ENCODE measurements at regions of chr6 and their contacts with region 1.

Region 1: GRCh38 chr6:139028658-139029469 is at the start of gene ABRACL:
- DNase-seq: peak; percentile 70
- H3K4me3 ChIP-seq: peak within 1 kb of the TSS; percentile 74 to 94 (median 77)
- H3K27ac ChIP-seq: peak within 1 kb of the TSS; percentile 81
- H3K4me1 ChIP-seq: peaks cover 19% of the 10 kb centered on the region
- H3K27me3 ChIP-seq: no peaks in the 10 kb centered on the region
- CTCF ChIP-seq: no peak
- POLR2A ChIP-seq: peak; percentile 16
- total RNA-seq, gene ABRACL: 87.4 and 104 TPM in 2 replicates

Region 2: DNA sequence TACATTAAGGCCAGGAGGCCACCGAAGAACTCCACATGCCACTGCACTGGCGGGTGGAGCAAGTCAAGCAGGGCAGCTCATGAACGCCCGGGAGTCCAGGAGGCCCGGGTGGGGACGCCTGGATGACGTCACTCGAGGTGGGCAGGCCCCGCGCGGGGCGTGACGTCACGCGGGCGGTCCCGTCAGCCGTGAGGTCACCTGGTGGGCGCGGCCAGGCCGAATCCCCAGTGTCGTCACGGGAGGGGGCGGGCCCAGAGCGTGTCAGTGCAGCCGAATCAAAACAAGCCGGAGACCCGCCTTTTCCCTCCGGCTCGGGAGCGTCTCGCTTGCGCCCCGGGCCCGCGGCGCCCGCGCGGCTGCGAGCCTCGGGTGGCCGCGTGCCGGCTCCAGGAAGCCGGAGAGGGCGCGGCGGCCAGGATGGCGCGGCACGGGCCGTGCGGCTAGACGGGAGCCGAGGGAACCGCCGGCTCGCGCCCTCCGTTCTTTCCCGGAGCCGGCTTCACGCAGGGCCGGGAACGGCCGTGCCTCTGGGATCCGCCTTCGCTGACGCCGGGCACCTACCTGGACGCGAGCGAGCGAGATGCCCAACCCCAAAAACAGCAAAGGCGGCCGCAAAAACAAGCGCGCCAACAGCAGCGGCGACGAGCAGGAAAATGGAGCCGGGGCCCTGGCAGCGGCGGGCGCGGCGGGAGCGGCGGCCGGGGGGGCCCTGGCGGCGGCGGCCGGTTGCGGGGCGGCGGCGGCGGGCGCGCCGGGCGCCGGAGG is 106.1 kb after region 1 on chr6 and contains the start of gene HECA:
- CTCF ChIA-PET with region 1: no interaction called
- POLR2A ChIA-PET with region 1: no interaction called
- dilution Hi-C with region 1: no loop called
- intact Hi-C with region 1: loop called (anchors 2 kb)
- DNase-seq: peak; percentile 93
- H3K4me3 ChIP-seq: peak within 1 kb of the TSS; percentile 57 to 95 (median 86)
- H3K27ac ChIP-seq: peak within 1 kb of the TSS; percentile 73
- H3K4me1 ChIP-seq: peaks cover 4% of the 10 kb centered on the region
- H3K27me3 ChIP-seq: peaks cover 2% of the 10 kb centered on the region in 2 experiments
- CTCF ChIP-seq: no peak
- POLR2A ChIP-seq: no peak
- total RNA-seq, gene HECA: 16.7 and 18.2 TPM in 2 replicates